ENCODE measurements at regions of chr14 and their contacts with region 1.

Region 1: GRCh38 chr14:103094406-103095209 is at the start of gene EXOC3L4:
- DNase-seq: peak; percentile 40 to 68
- H3K4me3 ChIP-seq: peak within 1 kb of the TSS; percentile 27
- H3K4me3 Mint-ChIP-seq: peak within 1 kb of the TSS; percentile 62
- H3K27ac Mint-ChIP-seq: peak within 1 kb of the TSS; percentile 80
- H3K4me1 ChIP-seq: peaks cover 36% of the 10 kb centered on the region
- H3K4me1 Mint-ChIP-seq: peaks cover 18% of the 10 kb centered on the region
- H3K27me3 ChIP-seq: no peaks in the 10 kb centered on the region
- H3K27me3 Mint-ChIP-seq: no peaks in the 10 kb centered on the region
- CTCF ChIP-seq: no peak
- total RNA-seq, gene EXOC3L4: 6.3 and 6.7 TPM in 2 replicates

Region 2: GRCh38 chr14:102591889-102592763 is 502.5 kb before region 1 on chr14 and contains the start of gene RCOR1:
- CTCF ChIA-PET with region 1: no interaction called
- POLR2A ChIA-PET with region 1: no interaction called
- intact Hi-C with region 1: no loop called
- DNase-seq: peak; percentile 97 to 98
- H3K4me3 ChIP-seq: peak within 1 kb of the TSS; percentile 99
- H3K4me3 Mint-ChIP-seq: peak within 1 kb of the TSS; percentile 79
- H3K27ac Mint-ChIP-seq: peak within 1 kb of the TSS; percentile 82
- H3K4me1 ChIP-seq: peaks cover 29% of the 10 kb centered on the region
- H3K4me1 Mint-ChIP-seq: peaks cover 18% of the 10 kb centered on the region
- H3K27me3 ChIP-seq: no peaks in the 10 kb centered on the region
- H3K27me3 Mint-ChIP-seq: no peaks in the 10 kb centered on the region
- CTCF ChIP-seq: no peak
- total RNA-seq, gene RCOR1: 31.0 and 33.6 TPM in 2 replicates

Region 3: GRCh38 chr14:103078093-103078749 is 16.4 kb before region 1 on chr14:
- CTCF ChIA-PET with region 1: no interaction called
- POLR2A ChIA-PET with region 1: no interaction called
- intact Hi-C with region 1: loop called (anchors 2 kb)
- DNase-seq: peak; percentile 80 to 81
- H3K4me3 ChIP-seq: no peak overlapping the region
- H3K4me3 Mint-ChIP-seq: no peak overlapping the region
- H3K27ac Mint-ChIP-seq: no peak overlapping the region
- H3K4me1 ChIP-seq: no peaks in the 10 kb centered on the region
- H3K4me1 Mint-ChIP-seq: no peaks in the 10 kb centered on the region
- H3K27me3 ChIP-seq: no peaks in the 10 kb centered on the region
- H3K27me3 Mint-ChIP-seq: no peaks in the 10 kb centered on the region
- CTCF ChIP-seq: peak; percentile 80 to 84